Activated T-helper 2 cell treated with anti-CD3 and anti-CD28 coated beads, Interferon-gamma antibody, Interleukin-2, Interleukin-4, amounts not matched to agents 10 μg/mL and 5 μg/mL and 100 μg/mL, durations not matched to agents 14 hours and 24 hours and 36 hours (primary cell): ENCODE measurements at regions of chr22 and their contacts with region 1.

Region 1: GRCh38 chr22:17258015-17258787 is 39.0 kb upstream of the ADA2 start:
- DNase-seq: peak; percentile 71
- H3K4me3 Mint-ChIP-seq: peak overlapping the region; percentile 3
- H3K27ac Mint-ChIP-seq: no peak overlapping the region
- H3K4me1 Mint-ChIP-seq: peaks cover 23% of the 10 kb centered on the region
- H3K27me3 Mint-ChIP-seq: peaks cover 3% of the 10 kb centered on the region

Region 2: GRCh38 chr22:17171313-17172171 is 86.7 kb before region 1 on chr22:
- intact Hi-C with region 1: loop called (anchors 10 kb)
- DNase-seq: peak; percentile 71
- H3K4me3 Mint-ChIP-seq: peak overlapping the region; percentile 79
- H3K27ac Mint-ChIP-seq: peak overlapping the region; percentile 50
- H3K4me1 Mint-ChIP-seq: peaks cover 2% of the 10 kb centered on the region
- H3K27me3 Mint-ChIP-seq: peaks cover 6% of the 10 kb centered on the region

Region 3: DNA sequence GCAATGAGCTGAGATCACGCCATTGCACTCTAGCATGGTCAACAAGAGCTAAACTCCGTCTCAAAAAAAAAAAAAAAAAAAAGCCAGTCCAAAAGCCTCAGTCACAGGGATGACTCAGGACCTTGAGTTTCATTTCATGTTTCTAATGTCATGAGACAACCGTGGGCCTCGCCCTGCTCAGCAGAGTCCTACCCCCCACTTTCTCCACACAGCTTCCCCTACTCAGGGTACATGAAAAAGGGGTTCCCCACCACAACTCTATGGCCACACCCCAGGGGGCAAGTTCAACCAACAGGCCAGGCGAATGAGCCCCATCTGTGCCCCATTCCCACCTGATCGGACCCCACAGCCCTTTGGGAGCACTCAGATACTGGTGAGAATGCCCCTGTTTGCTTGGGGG is 14.7 kb before region 1 on chr22:
- intact Hi-C with region 1: loop called (anchors 2 kb)
- DNase-seq: no peak
- H3K4me3 Mint-ChIP-seq: no peak overlapping the region
- H3K27ac Mint-ChIP-seq: peak overlapping the region; percentile 65
- H3K4me1 Mint-ChIP-seq: peaks cover 19% of the 10 kb centered on the region
- H3K27me3 Mint-ChIP-seq: no peaks in the 10 kb centered on the region

Region 4: GRCh38 chr22:17303840-17304779 is 45.9 kb after region 1 on chr22:
- intact Hi-C with region 1: loop called (anchors 1 kb)
- DNase-seq: peak; percentile 65
- H3K4me3 Mint-ChIP-seq: no peak overlapping the region
- H3K27ac Mint-ChIP-seq: peak overlapping the region; percentile 71
- H3K4me1 Mint-ChIP-seq: peaks cover 25% of the 10 kb centered on the region
- H3K27me3 Mint-ChIP-seq: no peaks in the 10 kb centered on the region